Activated CD4-positive, alpha-beta T cell treated with anti-CD3 and anti-CD28 coated beads, Interleukin-2, amount 10 ng/mL, durations not matched to agents 24 days and 14 days (primary cell): ENCODE measurements at regions of chr9 and their contacts with region 1.

Region 1: DNA sequence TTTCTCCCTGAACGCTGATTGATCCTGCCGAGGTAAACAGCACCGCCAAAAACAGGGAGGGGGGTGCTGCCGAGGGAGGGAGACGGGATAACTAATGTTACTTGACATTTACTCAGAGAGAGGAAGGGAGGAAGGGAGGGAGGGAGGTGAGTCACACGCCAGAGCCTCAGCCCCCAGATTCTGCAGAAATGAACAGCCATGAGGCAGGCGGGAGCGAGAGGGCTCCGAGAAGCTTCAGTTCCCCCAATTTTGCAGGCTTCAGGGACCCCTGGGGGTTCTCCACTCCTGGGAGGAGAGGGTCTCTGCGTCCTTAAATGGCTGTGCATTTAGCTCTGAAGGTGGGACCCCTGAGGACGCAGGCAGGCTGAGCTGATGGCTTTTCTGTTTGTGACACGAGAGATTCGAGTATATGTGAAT is 59.1 kb upstream of the IER5L start:
- DNase-seq: peak; percentile 80
- H3K4me3 Mint-ChIP-seq: peak overlapping the region; percentile 79
- H3K27ac Mint-ChIP-seq: peak overlapping the region; percentile 92
- H3K4me1 Mint-ChIP-seq: peaks cover 51% of the 10 kb centered on the region
- H3K27me3 Mint-ChIP-seq: no peaks in the 10 kb centered on the region

Region 2: GRCh38 chr9:129139993-129140396 is 97.2 kb before region 1 on chr9:
- intact Hi-C with region 1: loop called (anchors 5 kb)
- DNase-seq: peak; percentile 93
- H3K4me3 Mint-ChIP-seq: peak overlapping the region; percentile 80
- H3K27ac Mint-ChIP-seq: peak overlapping the region; percentile 93
- H3K4me1 Mint-ChIP-seq: peaks cover 37% of the 10 kb centered on the region
- H3K27me3 Mint-ChIP-seq: no peaks in the 10 kb centered on the region

Region 3: GRCh38 chr9:129202613-129203555 is 34.3 kb before region 1 on chr9:
- intact Hi-C with region 1: loop called (anchors 2 kb)
- DNase-seq: peak; percentile 98
- H3K4me3 Mint-ChIP-seq: peak overlapping the region; percentile 80
- H3K27ac Mint-ChIP-seq: peak overlapping the region; percentile 83
- H3K4me1 Mint-ChIP-seq: peaks cover 11% of the 10 kb centered on the region
- H3K27me3 Mint-ChIP-seq: peaks cover 6% of the 10 kb centered on the region

Region 4: GRCh38 chr9:129258124-129258822 is 21.1 kb after region 1 on chr9:
- intact Hi-C with region 1: loop called (anchors 1 kb)
- DNase-seq: peak; percentile 97
- H3K4me3 Mint-ChIP-seq: peak overlapping the region; percentile 82
- H3K27ac Mint-ChIP-seq: no peak overlapping the region
- H3K4me1 Mint-ChIP-seq: peaks cover 34% of the 10 kb centered on the region
- H3K27me3 Mint-ChIP-seq: peaks cover 42% of the 10 kb centered on the region

Region 5: DNA sequence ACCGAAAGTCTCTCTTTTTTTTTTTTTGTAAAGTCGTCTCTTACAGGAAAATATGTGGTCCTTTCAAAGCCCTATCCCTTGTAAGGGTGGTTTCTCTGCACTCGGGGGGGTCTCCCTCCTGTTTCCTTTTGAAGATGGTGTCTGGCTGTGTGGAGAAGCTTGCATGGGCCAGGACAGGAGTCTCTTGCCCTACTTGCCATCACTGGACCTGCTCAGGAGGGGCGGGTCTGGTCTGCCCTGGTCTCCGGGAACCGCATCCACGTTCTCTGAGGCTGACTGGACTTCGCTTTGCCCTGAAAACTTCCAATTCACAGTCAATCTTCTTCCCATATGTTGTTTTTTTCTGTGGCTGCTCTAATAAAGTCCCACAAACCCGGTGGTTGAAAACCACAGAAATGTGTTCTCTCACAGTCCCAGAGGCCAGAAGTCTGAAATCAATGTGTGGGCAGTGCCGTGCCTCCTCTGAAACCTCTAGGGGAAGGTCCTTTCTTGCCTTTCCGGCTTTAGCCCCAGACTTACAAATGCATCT is 33.8 kb after region 1 on chr9:
- intact Hi-C with region 1: loop called (anchors 5 kb)
- DNase-seq: peak; percentile 70
- H3K4me3 Mint-ChIP-seq: peak overlapping the region; percentile 60
- H3K27ac Mint-ChIP-seq: peak overlapping the region; percentile 71
- H3K4me1 Mint-ChIP-seq: peaks cover 28% of the 10 kb centered on the region
- H3K27me3 Mint-ChIP-seq: peaks cover 19% of the 10 kb centered on the region

Region 6: GRCh38 chr9:129460323-129461261 is 223.4 kb after region 1 on chr9:
- intact Hi-C with region 1: loop called (anchors 2 kb)
- DNase-seq: peak; percentile 96
- H3K4me3 Mint-ChIP-seq: peak overlapping the region; percentile 83
- H3K27ac Mint-ChIP-seq: peak overlapping the region; percentile 93
- H3K4me1 Mint-ChIP-seq: peaks cover 39% of the 10 kb centered on the region
- H3K27me3 Mint-ChIP-seq: no peaks in the 10 kb centered on the region